Panc1 (cell line): ENCODE measurements at regions of chr7 and their contacts with region 1.

Region 1: GRCh38 chr7:139341058-139341775 is at the start of gene FMC1:
- DNase-seq: peak; percentile 94
- ATAC-seq: peak; percentile 89
- H3K4me3 ChIP-seq: peak within 1 kb of the TSS; percentile 69 to 90
- H3K27ac ChIP-seq: peak within 1 kb of the TSS; percentile 98
- H3K4me1 ChIP-seq: peaks cover 8% of the 10 kb centered on the region
- H3K27me3 ChIP-seq: no peaks in the 10 kb centered on the region
- CTCF ChIP-seq: no peak; the same call in 1 of the 2 replicates
- total RNA-seq, gene FMC1: 12.7 TPM

Region 2: GRCh38 chr7:139359366-139360209 is 18.4 kb after region 1 on chr7 and contains the start of gene LUC7L2:
- CTCF ChIA-PET with region 1: no interaction called
- POLR2A ChIA-PET with region 1: interaction called, 4 read pairs
- in situ Hi-C with region 1: no loop called
- intact Hi-C with region 1: loop called (anchors 1 kb)
- DNase-seq: peak; percentile 98
- ATAC-seq: peak; percentile 92
- H3K4me3 ChIP-seq: peak within 1 kb of the TSS; percentile 98 to 100
- H3K27ac ChIP-seq: peak within 1 kb of the TSS; percentile 98
- H3K4me1 ChIP-seq: peaks cover 18% of the 10 kb centered on the region
- H3K27me3 ChIP-seq: no peaks in the 10 kb centered on the region
- CTCF ChIP-seq: no peak
- total RNA-seq, gene LUC7L2: 110 TPM

Region 3: DNA sequence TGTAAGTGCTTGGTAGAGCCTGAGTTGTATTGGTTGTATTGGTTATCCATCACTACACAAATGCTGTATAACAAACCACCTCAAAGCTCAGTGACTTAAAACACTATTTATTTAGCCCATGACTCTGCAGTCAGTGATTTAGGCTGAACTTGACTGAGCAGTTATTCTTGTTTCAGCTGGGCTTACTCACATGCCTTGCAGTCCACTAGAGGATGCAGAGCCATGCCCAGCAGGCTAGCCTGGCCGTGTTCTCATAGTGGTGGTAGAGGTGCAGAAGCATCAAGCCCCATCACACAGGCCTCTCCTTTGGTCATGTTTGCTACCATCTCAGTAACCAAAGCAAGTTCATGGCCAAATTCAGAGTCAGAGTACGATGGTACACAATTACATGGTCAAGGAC is 62.4 kb after region 1 on chr7:
- CTCF ChIA-PET with region 1: no interaction called
- POLR2A ChIA-PET with region 1: no interaction called
- in situ Hi-C with region 1: no loop called
- intact Hi-C with region 1: no loop called
- DNase-seq: no peak
- ATAC-seq: no peak
- H3K4me3 ChIP-seq: no peak overlapping the region
- H3K27ac ChIP-seq: no peak overlapping the region
- H3K4me1 ChIP-seq: no peaks in the 10 kb centered on the region
- H3K27me3 ChIP-seq: no peaks in the 10 kb centered on the region
- CTCF ChIP-seq: no peak